Left ventricle myocardium inferior (tissue), 1 donor: ENCODE measurements at regions of chr1 and their contacts with region 1.

Region 1: DNA sequence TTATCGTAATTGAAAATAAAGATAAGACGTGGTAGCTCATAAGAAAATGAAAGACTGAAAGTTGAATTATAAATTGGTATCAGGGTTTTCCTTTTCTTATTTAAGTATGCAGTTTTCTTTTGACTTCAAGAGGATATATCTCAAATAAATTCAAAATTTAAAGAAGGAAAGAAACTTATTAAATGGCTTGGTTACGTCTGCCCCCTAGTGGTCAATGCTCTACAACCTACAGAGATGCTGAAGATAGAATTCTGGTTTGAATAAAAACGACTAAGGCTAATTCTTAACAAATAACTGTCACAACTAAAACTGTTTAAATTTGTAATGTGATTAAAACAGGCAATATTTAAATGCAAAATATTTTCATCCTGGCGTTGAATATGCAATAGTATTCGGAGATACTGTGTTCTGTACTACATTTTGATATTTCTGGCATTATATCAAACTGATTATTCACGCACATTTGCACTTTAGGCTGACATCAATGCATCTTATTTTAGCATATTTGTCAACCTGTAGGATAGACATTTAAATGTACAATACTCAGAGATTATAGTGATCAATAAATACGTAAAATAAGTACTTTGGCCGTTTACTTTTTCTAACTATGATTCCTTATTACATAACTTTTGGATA is 26.8 kb downstream of the IFI44 start:
- DNase-seq: no peak
- H3K4me3 ChIP-seq: no peak overlapping the region
- H3K27ac ChIP-seq: no peak overlapping the region
- H3K4me1 ChIP-seq: no peaks in the 10 kb centered on the region
- H3K27me3 ChIP-seq: no peaks in the 10 kb centered on the region
- CTCF ChIP-seq: peak; percentile 89

Region 2: DNA sequence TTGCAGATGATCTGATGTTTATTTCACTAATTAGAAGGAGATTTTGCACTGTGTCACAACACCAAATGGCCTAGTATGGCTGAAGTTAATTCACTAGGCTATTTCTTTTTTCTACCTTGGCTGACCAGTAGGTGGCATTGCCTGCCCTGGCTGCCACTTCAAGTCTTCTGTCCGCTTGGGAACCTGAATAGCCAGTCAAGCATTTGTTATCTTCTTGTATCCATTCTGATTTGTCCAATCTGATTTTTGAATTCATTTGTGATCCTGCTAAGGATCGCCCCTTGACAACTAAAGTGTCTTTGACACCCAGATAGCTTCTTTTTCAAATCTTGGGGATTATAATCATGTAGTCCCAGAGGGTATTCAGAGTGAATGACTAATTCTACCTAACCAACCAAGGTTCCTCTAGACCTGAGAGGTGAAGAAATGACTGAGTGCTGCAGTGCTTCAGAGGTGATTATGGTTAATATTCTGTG is 531.3 kb before region 1 on chr1:
- intact Hi-C with region 1: loop called (anchors 10 kb)
- DNase-seq: peak; percentile 21
- H3K4me3 ChIP-seq: no peak overlapping the region
- H3K27ac ChIP-seq: no peak overlapping the region
- H3K4me1 ChIP-seq: no peaks in the 10 kb centered on the region
- H3K27me3 ChIP-seq: no peaks in the 10 kb centered on the region
- CTCF ChIP-seq: peak; percentile 88

Region 3: GRCh38 chr1:78617615-78618026 is 58.8 kb before region 1 on chr1:
- intact Hi-C with region 1: loop called (anchors 5 kb)
- DNase-seq: peak; percentile 32
- H3K4me3 ChIP-seq: peak overlapping the region; percentile 26
- H3K27ac ChIP-seq: peak overlapping the region; percentile 86
- H3K4me1 ChIP-seq: peaks cover 25% of the 10 kb centered on the region
- H3K27me3 ChIP-seq: no peaks in the 10 kb centered on the region
- CTCF ChIP-seq: peak; percentile 88